ENCODE measurements at regions of chr4 and their contacts with region 1.

Region 1: DNA sequence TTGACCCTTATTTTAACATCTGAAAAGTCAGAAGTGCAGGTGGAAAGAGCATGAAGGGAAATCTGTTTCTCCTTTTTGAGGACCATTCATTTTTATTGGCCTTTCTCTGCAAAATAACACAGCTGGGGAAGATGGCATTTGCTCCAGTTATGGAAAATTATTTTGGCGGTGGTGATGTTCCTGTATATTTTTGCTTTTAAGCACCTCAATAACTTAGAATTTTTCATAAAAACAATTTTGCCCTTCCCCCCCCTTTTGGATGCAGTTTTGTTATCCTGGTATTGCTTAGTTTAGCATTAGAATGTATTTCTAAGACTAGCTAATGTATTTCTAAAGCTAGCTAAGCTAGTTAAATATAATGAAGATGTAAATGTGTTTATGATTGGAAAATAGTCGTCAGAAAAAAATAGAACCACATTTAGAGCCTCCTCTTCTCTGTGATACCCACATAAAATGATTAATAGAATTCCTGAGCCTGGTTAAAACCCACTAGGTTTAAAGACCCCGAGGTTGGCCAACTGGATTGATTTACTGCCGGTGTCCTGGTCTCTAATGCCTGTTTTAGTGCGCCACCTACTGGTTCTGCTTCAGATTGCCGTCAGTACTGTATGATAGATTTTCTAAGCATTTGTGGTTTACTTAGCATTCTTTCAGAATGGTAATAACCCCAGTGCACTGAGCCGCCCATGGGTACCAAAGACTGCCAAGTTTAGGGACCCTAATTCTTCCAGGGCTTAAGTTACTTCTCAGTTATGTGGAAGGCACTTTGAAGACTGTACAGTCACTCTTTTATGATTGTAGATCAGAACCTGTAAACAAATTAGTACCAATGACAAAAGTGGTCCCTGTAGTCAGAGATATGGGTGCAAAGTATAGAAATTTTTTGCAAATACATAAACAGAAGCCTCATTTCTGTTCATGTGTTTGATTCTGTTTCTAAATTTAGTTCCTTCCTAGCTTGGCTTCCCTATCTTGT is 11.4 kb downstream of the KLF3 start:
- DNase-seq: peak; percentile 78 to 81 (median 80)
- H3K4me3 ChIP-seq: no peak overlapping the region
- H3K4me3 Mint-ChIP-seq: peak overlapping the region; percentile 15 to 85 (median 82)
- H3K27ac ChIP-seq: peak overlapping the region; percentile 22
- H3K27ac Mint-ChIP-seq: peak overlapping the region; percentile 76 to 96 (median 88)
- H3K4me1 ChIP-seq: peaks cover 79% of the 10 kb centered on the region
- H3K4me1 Mint-ChIP-seq: peaks cover 72 to 94% (median 84%) of the 10 kb centered on the region in 4 donors
- H3K27me3 ChIP-seq: no peaks in the 10 kb centered on the region
- H3K27me3 Mint-ChIP-seq: no peaks in the 10 kb centered on the region

Region 2: DNA sequence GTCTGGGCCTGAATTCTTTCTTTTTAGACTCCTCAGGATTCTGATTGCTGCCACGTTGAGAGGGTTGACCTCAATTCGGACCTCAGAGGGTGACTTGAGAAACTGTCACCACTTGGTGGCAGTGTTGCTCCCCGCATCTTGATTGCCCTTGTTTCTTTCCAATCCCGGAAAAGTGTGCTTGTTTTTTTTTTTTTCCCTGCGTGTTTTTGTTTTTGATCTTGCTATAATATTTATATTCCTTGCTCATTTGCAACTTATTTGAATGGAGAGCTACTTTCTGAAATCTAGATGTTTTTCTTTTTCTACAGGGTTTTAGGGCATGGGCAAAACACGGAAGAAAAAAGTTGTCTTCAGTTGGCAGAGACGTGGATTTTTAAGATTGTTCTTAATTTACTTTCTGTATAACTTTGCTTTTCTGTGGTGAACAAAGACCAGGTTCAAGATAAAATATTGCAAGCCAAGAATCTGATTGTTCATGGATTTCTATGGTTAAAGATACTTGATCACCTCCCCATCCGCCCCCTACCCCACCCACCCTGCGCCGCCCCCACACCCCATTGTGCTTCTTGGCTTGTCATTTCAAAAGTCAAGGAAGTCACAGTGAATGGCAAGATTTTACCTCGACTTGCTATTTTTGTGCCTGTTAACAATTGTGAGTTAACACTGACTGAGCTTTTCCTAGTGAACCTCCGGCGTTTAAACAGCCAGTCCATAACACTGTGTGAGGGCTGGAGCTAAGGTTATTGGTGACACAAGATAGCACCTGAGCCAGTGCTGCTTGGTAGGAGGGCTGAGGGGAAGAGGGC is 613.1 kb before region 1 on chr4:
- CTCF ChIA-PET with region 1: interaction called, 6 read pairs
- POLR2A ChIA-PET with region 1: no interaction called
- intact Hi-C with region 1: loop called (anchors 1 kb)
- DNase-seq: peak; percentile 38 to 51 (median 49)
- H3K4me3 ChIP-seq: peak overlapping the region in 1 of 2 donors; percentile 42
- H3K4me3 Mint-ChIP-seq: peak overlapping the region; percentile 73 to 94 (median 87)
- H3K27ac ChIP-seq: no peak overlapping the region
- H3K27ac Mint-ChIP-seq: peak overlapping the region; percentile 20 to 91 (median 72)
- H3K4me1 ChIP-seq: peaks cover 4% of the 10 kb centered on the region
- H3K4me1 Mint-ChIP-seq: peaks cover 7 to 16% (median 8%) of the 10 kb centered on the region in 4 donors
- H3K27me3 ChIP-seq: no peaks in the 10 kb centered on the region
- H3K27me3 Mint-ChIP-seq: no peaks in the 10 kb centered on the region

Region 3: DNA sequence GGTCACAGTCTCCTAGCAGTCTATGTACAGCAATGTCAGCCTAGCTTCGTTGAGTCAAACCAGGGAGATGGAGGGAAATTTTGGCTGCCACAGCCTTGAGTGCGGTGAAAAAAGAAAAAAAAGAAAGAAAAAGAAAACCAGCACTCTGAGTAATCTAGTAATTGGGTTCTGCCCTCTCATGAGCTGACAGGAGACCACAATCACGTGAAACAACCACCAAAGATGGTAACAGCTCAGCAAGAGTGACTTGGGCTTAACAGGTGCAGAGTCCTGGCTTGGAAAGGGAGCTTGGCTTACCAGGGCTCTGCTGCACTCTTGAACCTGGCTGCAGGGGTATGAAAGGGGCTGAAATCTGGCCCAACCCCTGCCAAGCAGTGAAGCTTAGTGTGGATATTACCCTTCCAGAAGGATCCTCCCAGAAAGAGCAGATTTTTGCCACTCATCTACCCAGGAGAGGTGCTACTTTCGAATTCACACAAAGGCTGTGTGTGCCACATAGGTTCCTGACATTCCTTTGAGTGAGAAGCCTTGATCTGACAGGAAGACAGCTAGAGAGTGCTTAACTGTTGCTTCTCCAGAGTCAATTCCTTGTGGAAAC is 364.9 kb before region 1 on chr4:
- CTCF ChIA-PET with region 1: interaction called, 171 read pairs
- POLR2A ChIA-PET with region 1: interaction called, 11 read pairs
- intact Hi-C with region 1: no loop called
- DNase-seq: peak; percentile 83 to 91 (median 86)
- H3K4me3 ChIP-seq: peak overlapping the region in 1 of 2 donors; percentile 41
- H3K4me3 Mint-ChIP-seq: peak overlapping the region; percentile 64 to 88 (median 76)
- H3K27ac ChIP-seq: peak overlapping the region; percentile 33
- H3K27ac Mint-ChIP-seq: peak overlapping the region; percentile 84 to 96 (median 92)
- H3K4me1 ChIP-seq: peaks cover 53% of the 10 kb centered on the region
- H3K4me1 Mint-ChIP-seq: peaks cover 39 to 71% (median 54%) of the 10 kb centered on the region in 4 donors
- H3K27me3 ChIP-seq: no peaks in the 10 kb centered on the region
- H3K27me3 Mint-ChIP-seq: no peaks in the 10 kb centered on the region

Region 4: DNA sequence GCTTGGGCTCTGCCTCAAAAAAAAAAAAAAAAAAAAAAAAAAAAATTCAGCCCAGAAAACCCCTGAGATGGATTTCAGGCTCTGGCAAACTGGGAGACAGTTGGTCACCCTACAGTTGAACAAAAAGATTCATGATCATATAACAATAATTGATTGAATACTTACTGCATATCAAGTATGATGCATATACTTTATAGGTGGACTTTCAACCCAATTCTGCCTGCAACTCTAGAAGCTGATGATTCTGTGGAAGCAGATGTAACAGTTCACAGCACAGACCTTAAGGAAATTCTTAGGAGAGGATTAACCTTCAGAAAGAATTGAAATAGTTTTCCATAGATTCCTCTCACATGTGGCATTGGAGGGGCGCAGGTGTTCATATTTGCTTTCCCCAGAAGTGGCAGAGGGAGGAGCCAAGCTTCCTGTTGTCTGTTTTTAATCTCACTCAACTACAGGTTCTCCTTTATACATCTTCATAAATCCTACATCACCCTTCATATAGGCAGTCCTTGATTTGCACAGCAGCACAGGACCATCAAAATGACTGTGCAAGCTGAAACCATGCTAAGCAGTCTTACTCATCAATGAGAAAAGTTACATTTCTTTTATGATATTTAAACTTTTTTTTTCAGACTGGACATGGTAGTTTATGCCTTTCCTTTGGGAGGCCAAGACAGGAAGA is 160.8 kb before region 1 on chr4:
- CTCF ChIA-PET with region 1: interaction called, 7 read pairs
- POLR2A ChIA-PET with region 1: interaction called, 108 read pairs
- intact Hi-C with region 1: no loop called
- DNase-seq: peak in 1 of 5 donors; percentile 9
- H3K4me3 ChIP-seq: no peak overlapping the region
- H3K4me3 Mint-ChIP-seq: peak overlapping the region; percentile 34 to 82 (median 74)
- H3K27ac ChIP-seq: no peak overlapping the region
- H3K27ac Mint-ChIP-seq: peak overlapping the region in 5 of 7 donors; percentile 4 to 86 (median 22)
- H3K4me1 ChIP-seq: peaks cover 81% of the 10 kb centered on the region
- H3K4me1 Mint-ChIP-seq: peaks cover 57 to 78% (median 69%) of the 10 kb centered on the region in 4 donors
- H3K27me3 ChIP-seq: no peaks in the 10 kb centered on the region
- H3K27me3 Mint-ChIP-seq: no peaks in the 10 kb centered on the region

Region 5: GRCh38 chr4:38582889-38583470 is 92.5 kb before region 1 on chr4:
- CTCF ChIA-PET with region 1: interaction called, 17 read pairs
- POLR2A ChIA-PET with region 1: interaction called, 3 read pairs
- intact Hi-C with region 1: no loop called
- DNase-seq: peak; percentile 23 to 50 (median 35)
- H3K4me3 ChIP-seq: no peak overlapping the region
- H3K4me3 Mint-ChIP-seq: peak overlapping the region in 7 of 8 donors; percentile 6 to 73 (median 43)
- H3K27ac ChIP-seq: no peak overlapping the region
- H3K27ac Mint-ChIP-seq: peak overlapping the region; percentile 1 to 94 (median 81)
- H3K4me1 ChIP-seq: peaks cover 21% of the 10 kb centered on the region
- H3K4me1 Mint-ChIP-seq: peaks cover 11 to 44% (median 26%) of the 10 kb centered on the region in 4 donors
- H3K27me3 ChIP-seq: no peaks in the 10 kb centered on the region
- H3K27me3 Mint-ChIP-seq: no peaks in the 10 kb centered on the region

Region 6: GRCh38 chr4:38654273-38654672 is 21.2 kb before region 1 on chr4:
- CTCF ChIA-PET with region 1: interaction called, 12 read pairs
- POLR2A ChIA-PET with region 1: interaction called, 12 read pairs
- intact Hi-C with region 1: loop called (anchors 2 kb)
- DNase-seq: peak; percentile 73 to 84 (median 76)
- H3K4me3 ChIP-seq: peak overlapping the region in 1 of 2 donors; percentile 4
- H3K4me3 Mint-ChIP-seq: peak overlapping the region; percentile 78 to 88 (median 81)
- H3K27ac ChIP-seq: peak overlapping the region; percentile 78
- H3K27ac Mint-ChIP-seq: peak overlapping the region; percentile 82 to 100 (median 99)
- H3K4me1 ChIP-seq: peaks cover 61% of the 10 kb centered on the region
- H3K4me1 Mint-ChIP-seq: peaks cover 39 to 69% (median 54%) of the 10 kb centered on the region in 4 donors
- H3K27me3 ChIP-seq: no peaks in the 10 kb centered on the region
- H3K27me3 Mint-ChIP-seq: no peaks in the 10 kb centered on the region

Region 7: GRCh38 chr4:38730830-38731646 is 55.6 kb after region 1 on chr4:
- CTCF ChIA-PET with region 1: interaction called, 11 read pairs
- POLR2A ChIA-PET with region 1: no interaction called
- intact Hi-C with region 1: loop called (anchors 1 kb)
- DNase-seq: peak; percentile 75 to 77 (median 76)
- H3K4me3 ChIP-seq: no peak overlapping the region
- H3K4me3 Mint-ChIP-seq: peak overlapping the region in 1 of 8 donors; percentile 39
- H3K27ac ChIP-seq: no peak overlapping the region
- H3K27ac Mint-ChIP-seq: peak overlapping the region in 2 of 7 donors; percentile 8 to 62
- H3K4me1 ChIP-seq: peaks cover 18% of the 10 kb centered on the region
- H3K4me1 Mint-ChIP-seq: peaks cover 12 to 29% (median 18%) of the 10 kb centered on the region in 4 donors
- H3K27me3 ChIP-seq: no peaks in the 10 kb centered on the region
- H3K27me3 Mint-ChIP-seq: peaks cover 0 to 3% of the 10 kb centered on the region in 2 donors

Region 8: GRCh38 chr4:38782452-38783108 is 107.1 kb after region 1 on chr4 and contains the start of gene TLR10:
- CTCF ChIA-PET with region 1: no interaction called
- POLR2A ChIA-PET with region 1: no interaction called
- intact Hi-C with region 1: no loop called
- DNase-seq: peak in 4 of 5 donors; percentile 26 to 50 (median 40)
- H3K4me3 ChIP-seq: no peak within 1 kb of the TSS
- H3K4me3 Mint-ChIP-seq: peak within 1 kb of the TSS in 4 of 8 donors; percentile 22 to 62 (median 43)
- H3K27ac ChIP-seq: no peak within 1 kb of the TSS
- H3K27ac Mint-ChIP-seq: no peak within 1 kb of the TSS
- H3K4me1 ChIP-seq: no peaks in the 10 kb centered on the region
- H3K4me1 Mint-ChIP-seq: peaks cover 2 to 5% (median 3%) of the 10 kb centered on the region in 4 donors
- H3K27me3 ChIP-seq: no peaks in the 10 kb centered on the region
- H3K27me3 Mint-ChIP-seq: peaks cover 0 to 2% of the 10 kb centered on the region in 2 donors
- total RNA-seq, gene TLR10: 0.20 to 0.28 TPM

Region 9: DNA sequence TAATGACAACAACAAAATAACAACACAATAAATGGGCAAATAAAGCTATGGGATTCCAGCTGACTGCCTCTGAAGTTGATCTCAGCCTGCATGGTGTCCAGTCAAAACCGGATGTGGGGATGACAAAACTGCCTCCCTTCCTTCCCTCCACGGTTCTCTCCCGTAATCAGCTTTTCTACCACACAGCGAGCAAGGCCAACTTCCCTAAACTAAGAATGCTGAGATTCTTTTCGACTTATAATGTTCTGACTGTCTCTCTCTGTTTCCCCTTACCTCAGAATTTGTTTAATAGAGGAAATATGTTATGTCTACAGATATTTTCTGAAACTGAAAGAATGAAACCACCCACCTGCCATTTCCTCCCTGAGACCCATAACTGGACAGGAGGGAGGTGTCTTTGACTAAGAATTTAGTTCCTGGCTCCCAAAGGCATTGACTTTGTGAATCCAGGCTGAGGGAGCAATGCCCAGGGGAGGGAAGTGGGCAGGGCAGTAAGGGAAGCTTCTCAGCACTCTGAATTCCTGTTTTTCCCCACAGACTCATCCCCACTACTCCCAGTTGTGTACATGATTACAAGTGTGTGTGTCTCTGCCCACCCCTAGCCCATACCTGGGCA is 130.2 kb after region 1 on chr4:
- CTCF ChIA-PET with region 1: no interaction called
- POLR2A ChIA-PET with region 1: no interaction called
- intact Hi-C with region 1: no loop called
- DNase-seq: peak in 1 of 5 donors; percentile 10
- H3K4me3 ChIP-seq: peak overlapping the region; percentile 30 to 54
- H3K4me3 Mint-ChIP-seq: peak overlapping the region; percentile 90 to 96 (median 92)
- H3K27ac ChIP-seq: peak overlapping the region; percentile 47
- H3K27ac Mint-ChIP-seq: peak overlapping the region; percentile 84 to 99 (median 94)
- H3K4me1 ChIP-seq: peaks cover 25% of the 10 kb centered on the region
- H3K4me1 Mint-ChIP-seq: peaks cover 22 to 40% (median 34%) of the 10 kb centered on the region in 4 donors
- H3K27me3 ChIP-seq: no peaks in the 10 kb centered on the region
- H3K27me3 Mint-ChIP-seq: no peaks in the 10 kb centered on the region

Measured in CD4-positive, alpha-beta memory T cell (primary cell).